CD4-positive, alpha-beta T cell (primary cell): ENCODE measurements at regions of chr1 and their contacts with region 1.

Region 1: DNA sequence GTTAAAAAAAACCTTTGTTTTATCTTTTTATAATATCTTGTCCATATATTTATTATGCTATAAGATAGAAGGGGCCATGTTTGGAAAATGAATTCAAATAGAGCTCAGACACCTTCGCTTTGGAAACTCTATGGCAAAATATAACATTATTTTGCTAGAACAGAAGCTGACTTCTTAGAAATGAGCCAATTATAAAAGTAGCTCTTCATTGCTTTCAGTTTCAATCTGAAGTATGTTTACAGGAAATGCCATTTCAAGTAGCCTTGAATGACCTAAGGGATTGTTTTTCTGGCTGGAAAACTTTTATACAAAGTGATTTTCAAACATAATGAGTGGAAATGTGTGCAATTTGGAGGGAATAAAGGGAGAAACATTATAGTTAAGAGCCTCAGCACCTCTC is 37.8 kb upstream of the GBP5 start:
- DNase-seq: peak in 3 of 14 experiments; percentile 14 to 80 (median 27)
- ATAC-seq: peak; percentile 52
- H3K4me3 ChIP-seq: peak overlapping the region; percentile 11
- H3K4me3 Mint-ChIP-seq: peak overlapping the region; percentile 47
- H3K27ac ChIP-seq: peak overlapping the region; percentile 24 to 38
- H3K27ac Mint-ChIP-seq: peak overlapping the region; percentile 78
- H3K4me1 ChIP-seq: peaks cover 31% of the 10 kb centered on the region
- H3K4me1 Mint-ChIP-seq: peaks cover 42% of the 10 kb centered on the region
- H3K27me3 ChIP-seq: no peaks in the 10 kb centered on the region
- H3K27me3 Mint-ChIP-seq: no peaks in the 10 kb centered on the region
- CTCF ChIP-seq: no peak

Region 2: DNA sequence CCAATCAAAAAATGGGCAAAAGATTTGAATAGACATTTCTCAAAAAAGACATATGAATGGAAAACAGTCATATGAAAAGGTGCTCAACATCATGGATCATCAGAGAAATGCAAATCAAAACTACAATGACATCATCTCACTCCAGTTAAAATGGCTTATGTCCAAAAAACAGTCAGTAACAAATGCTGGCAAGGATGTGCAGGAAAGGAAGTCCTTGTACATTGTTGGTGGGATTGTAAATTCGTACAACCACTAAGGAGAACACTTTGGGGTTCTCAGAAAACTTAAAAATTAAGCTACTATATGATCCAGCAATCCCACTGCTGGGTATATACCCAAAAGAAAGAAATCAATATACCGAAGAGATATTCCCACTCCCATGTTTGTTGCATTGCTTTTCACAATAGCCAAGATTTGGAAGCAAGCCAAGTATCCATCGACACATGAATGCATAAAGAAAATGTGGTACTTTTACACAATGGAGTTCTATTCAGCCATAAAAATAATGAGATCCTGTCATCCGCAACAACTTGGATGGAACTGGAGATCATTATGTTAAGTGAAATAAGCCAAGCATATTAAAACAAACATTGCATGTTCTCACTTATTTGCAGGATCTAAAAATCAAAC is 55.7 kb before region 1 on chr1:
- CTCF ChIA-PET with region 1: no interaction called
- POLR2A ChIA-PET with region 1: interaction called, 3 read pairs
- intact Hi-C with region 1: loop called in 1 of 2 experiments (anchors 5 kb)
- DNase-seq: no peak
- ATAC-seq: no peak
- H3K4me3 ChIP-seq: no peak overlapping the region
- H3K4me3 Mint-ChIP-seq: no peak overlapping the region
- H3K27ac ChIP-seq: no peak overlapping the region
- H3K27ac Mint-ChIP-seq: no peak overlapping the region
- H3K4me1 ChIP-seq: peaks cover 7% of the 10 kb centered on the region
- H3K4me1 Mint-ChIP-seq: peaks cover 42% of the 10 kb centered on the region
- H3K27me3 ChIP-seq: no peaks in the 10 kb centered on the region
- H3K27me3 Mint-ChIP-seq: no peaks in the 10 kb centered on the region
- CTCF ChIP-seq: no peak

Region 3: DNA sequence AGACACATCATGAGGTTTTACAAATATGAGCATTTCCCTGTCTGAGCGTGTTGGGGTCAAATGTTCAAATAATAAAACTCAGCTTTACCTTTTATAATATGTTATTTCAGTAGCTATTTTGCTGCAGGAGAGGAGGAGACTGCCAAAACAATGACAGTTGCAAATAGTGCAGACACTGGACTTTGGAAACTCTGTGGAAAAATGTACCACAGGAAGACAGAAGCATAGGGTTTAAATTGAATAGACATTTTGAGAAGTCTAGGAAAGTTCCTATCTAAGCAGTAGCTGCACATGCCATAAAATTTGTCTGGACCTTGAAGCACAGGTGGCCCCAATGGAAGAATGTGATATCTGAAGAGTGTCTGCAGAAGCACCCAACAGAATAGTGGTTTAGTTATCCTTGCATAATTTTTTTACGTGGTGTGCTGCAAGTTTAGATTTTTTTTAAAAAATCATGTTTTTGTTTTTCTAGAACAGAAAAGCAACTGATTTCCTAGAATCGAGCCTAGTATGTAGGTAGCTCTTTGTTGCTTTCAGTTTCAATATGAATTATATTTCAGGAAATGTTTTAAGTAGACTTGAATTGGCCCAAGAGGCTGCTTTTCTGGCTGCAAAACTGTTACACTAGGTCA is 23.8 kb before region 1 on chr1:
- CTCF ChIA-PET with region 1: interaction called, 4 read pairs
- POLR2A ChIA-PET with region 1: interaction called, 69 read pairs
- intact Hi-C with region 1: no loop called
- DNase-seq: peak in 3 of 14 experiments; percentile 39 to 82 (median 48)
- ATAC-seq: peak; percentile 76
- H3K4me3 ChIP-seq: peak overlapping the region; percentile 28
- H3K4me3 Mint-ChIP-seq: peak overlapping the region; percentile 62
- H3K27ac ChIP-seq: peak overlapping the region; percentile 53 to 54
- H3K27ac Mint-ChIP-seq: peak overlapping the region; percentile 78
- H3K4me1 ChIP-seq: peaks cover 45% of the 10 kb centered on the region
- H3K4me1 Mint-ChIP-seq: peaks cover 61% of the 10 kb centered on the region
- H3K27me3 ChIP-seq: no peaks in the 10 kb centered on the region
- H3K27me3 Mint-ChIP-seq: no peaks in the 10 kb centered on the region
- CTCF ChIP-seq: no peak

Region 4: GRCh38 chr1:89298461-89298860 is 12.0 kb before region 1 on chr1:
- CTCF ChIA-PET with region 1: interaction called, 5 read pairs
- POLR2A ChIA-PET with region 1: interaction called, 25 read pairs
- intact Hi-C with region 1: no loop called
- DNase-seq: no peak
- ATAC-seq: no peak
- H3K4me3 ChIP-seq: no peak overlapping the region
- H3K4me3 Mint-ChIP-seq: no peak overlapping the region
- H3K27ac ChIP-seq: no peak overlapping the region
- H3K27ac Mint-ChIP-seq: no peak overlapping the region
- H3K4me1 ChIP-seq: peaks cover 19% of the 10 kb centered on the region
- H3K4me1 Mint-ChIP-seq: peaks cover 45% of the 10 kb centered on the region
- H3K27me3 ChIP-seq: no peaks in the 10 kb centered on the region
- H3K27me3 Mint-ChIP-seq: no peaks in the 10 kb centered on the region
- CTCF ChIP-seq: no peak

Region 5: DNA sequence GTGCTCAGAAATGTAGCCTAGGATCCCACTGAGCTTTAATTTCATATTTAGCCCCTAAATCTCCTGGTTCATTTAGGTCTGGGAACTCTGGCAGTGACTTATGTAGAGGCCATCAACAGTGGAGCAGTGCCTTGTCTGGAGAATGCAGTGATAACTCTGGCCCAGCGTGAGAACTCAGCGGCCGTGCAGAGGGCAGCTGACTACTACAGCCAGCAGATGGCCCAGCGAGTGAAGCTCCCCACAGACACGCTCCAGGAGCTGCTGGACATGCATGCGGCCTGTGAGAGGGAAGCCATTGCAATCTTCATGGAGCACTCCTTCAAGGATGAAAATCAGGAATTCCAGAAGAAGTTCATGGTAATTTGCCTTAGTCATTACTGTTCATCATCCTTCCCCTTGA is 71.1 kb after region 1 on chr1:
- CTCF ChIA-PET with region 1: no interaction called
- POLR2A ChIA-PET with region 1: no interaction called
- intact Hi-C with region 1: no loop called
- DNase-seq: no peak
- ATAC-seq: no peak
- H3K4me3 ChIP-seq: no peak overlapping the region
- H3K4me3 Mint-ChIP-seq: no peak overlapping the region
- H3K27ac ChIP-seq: no peak overlapping the region
- H3K27ac Mint-ChIP-seq: no peak overlapping the region
- H3K4me1 ChIP-seq: no peaks in the 10 kb centered on the region
- H3K4me1 Mint-ChIP-seq: no peaks in the 10 kb centered on the region
- H3K27me3 ChIP-seq: no peaks in the 10 kb centered on the region
- H3K27me3 Mint-ChIP-seq: no peaks in the 10 kb centered on the region
- CTCF ChIP-seq: no peak